OCI-LY7 (cell line): ENCODE measurements at regions of chr19 and their contacts with region 1.

Region 1: DNA sequence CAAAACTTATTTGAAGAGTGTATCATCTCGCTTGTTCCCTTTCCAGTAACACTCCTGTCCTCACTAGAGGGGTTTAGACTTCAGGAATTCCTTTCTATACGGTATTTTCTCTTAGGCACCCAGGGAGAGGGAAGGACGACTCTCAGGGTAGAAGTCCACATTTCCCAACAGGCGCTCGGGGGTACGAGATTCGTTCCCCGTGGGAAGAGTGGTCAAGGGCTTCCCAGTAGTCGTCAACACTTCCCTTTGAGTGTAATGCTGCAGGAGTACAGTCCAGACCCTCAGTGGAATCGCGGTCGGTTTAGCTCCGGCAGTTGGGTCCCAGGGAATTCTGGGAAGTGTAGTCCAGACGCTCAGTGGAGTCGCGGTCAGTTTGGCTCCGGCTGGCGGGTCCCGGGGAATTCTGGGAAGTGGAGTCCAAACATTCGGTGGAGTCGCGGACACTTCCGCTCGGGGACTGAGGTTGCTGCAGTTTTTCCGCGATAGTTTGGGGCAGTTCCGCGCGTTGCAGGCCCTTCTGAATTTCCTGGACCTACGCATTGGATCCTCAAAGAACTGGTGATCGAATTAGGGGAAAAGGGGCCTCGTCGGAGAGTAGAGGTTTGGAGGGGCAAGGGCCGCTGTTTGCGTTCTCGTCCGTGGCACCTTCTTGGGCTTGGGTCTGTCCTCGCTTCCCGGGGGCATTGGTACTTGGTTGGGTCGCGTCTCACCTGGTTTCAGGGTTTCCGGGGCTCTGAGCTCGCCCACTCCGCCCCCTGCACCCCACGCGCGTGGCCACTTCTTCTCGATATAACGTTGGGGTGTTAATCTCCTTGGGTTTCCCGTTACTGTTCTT is at the start of gene ZNF224:
- DNase-seq: peak; percentile 92
- H3K4me3 ChIP-seq: peak within 1 kb of the TSS; percentile 92
- H3K27ac ChIP-seq: peak within 1 kb of the TSS; percentile 19
- H3K4me1 ChIP-seq: peaks cover 11% of the 10 kb centered on the region
- CTCF ChIP-seq: no peak
- total RNA-seq, gene ZNF224: 17.5 and 20.4 TPM in 2 replicates

Region 2: DNA sequence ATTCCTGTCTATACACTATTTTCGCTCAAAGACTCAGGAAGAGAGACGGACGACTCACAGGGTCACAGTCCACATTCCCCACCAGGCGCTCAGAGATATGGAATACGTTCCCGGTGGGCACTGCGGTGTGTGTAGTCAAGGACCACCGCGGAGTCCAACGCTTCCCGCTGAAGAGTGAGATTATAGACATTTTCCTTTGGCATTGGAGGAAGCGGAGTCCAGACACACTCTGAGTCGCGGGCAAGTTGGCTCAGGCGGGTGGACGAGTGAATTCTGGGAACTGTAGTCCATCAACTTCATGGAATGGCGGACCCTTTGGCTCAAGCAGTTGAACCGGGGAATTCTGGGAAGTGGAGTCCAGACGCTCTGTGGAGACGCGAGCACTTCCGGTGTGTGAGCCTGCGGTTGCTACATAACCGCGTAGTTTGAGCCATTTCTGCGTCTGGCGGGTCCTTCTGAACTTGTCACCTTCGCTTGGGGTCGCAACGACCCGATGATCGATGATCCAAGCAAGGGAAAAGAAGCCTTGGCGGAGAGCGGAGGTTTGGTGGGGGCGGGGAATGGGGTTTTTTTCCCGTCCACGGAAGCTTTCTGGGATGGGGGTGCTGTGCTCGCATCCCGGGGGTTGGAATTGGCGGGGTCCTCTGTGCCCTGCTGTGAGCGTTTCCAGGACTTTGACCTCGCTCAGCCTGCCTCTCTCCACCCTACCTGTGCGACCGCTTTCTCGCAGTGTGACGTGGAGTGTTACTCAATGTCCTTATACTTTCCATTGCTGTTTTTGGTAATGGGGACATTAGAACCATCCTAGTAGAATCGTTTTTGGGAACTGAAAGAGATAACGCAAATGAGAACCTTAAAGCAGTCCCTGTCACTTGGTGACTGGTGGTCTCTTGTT is 91.3 kb before region 1 on chr19 and contains the start of gene ZNF230:
- CTCF ChIA-PET with region 1: no interaction called
- POLR2A ChIA-PET with region 1: no interaction called
- intact Hi-C with region 1: loop called (anchors 10 kb)
- DNase-seq: peak; percentile 91
- H3K4me3 ChIP-seq: peak within 1 kb of the TSS; percentile 83
- H3K27ac ChIP-seq: no peak within 1 kb of the TSS
- H3K4me1 ChIP-seq: peaks cover 4% of the 10 kb centered on the region
- CTCF ChIP-seq: no peak
- total RNA-seq, gene ZNF230: 1.7 and 1.8 TPM in 2 replicates

Region 3: GRCh38 chr19:44212250-44212865 is 118.2 kb after region 1 on chr19 and contains the start of gene ZNF227:
- CTCF ChIA-PET with region 1: no interaction called
- POLR2A ChIA-PET with region 1: no interaction called
- intact Hi-C with region 1: loop called (anchors 10 kb)
- DNase-seq: peak; percentile 78
- H3K4me3 ChIP-seq: peak within 1 kb of the TSS; percentile 82
- H3K27ac ChIP-seq: peak within 1 kb of the TSS; percentile 13
- H3K4me1 ChIP-seq: peaks cover 17% of the 10 kb centered on the region
- CTCF ChIP-seq: no peak
- total RNA-seq, gene ZNF227: 16.8 and 20.1 TPM in 2 replicates